ENCODE measurements at regions of chr5 and their contacts with region 1.

Region 1: DNA sequence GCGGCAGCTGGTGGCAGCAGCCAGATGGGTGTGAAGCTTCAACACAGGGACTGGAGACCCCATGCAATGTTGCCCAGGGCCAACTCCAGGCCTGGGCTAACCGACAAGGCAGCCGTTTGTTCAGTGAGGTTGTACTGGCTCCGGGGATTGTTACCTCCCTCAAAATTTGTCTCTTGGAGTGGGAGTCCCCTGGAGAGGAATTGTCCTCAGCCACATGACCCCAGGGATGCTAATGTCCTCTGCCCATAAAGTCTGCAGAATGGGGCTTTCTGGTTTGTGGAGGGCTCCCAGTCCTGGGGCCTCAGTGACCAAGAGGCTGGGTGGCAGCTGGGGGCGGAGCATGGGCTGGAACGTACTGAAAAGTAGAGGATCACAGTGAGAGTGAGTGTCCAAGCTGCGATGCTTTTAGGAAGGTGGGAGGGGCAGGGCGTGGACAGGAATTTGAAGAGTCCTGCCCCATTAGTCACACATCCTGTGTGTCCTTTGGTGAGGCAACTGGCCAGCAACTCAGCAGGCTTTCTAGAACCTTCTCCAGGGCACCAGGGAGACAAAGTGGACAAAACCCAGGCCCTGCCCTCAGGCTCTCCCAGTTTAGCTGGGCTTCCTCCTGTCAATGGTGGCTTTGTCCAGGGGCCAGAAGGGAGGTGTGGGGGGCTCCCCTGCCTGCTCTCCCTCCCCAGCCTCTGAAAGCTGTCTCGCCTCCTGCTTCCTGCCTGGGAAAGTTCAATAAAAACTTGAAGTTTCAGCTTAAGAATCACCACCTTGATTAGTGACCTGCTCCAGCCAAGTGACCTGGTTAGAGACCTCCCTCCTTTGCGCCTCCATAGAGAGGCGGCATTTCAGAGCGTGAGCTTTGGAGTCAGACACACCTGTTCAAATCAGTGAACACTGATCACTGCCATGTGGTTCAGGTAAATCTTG is 114.1 kb downstream of the NSG2 start:
- DNase-seq: peak; percentile 96
- H3K4me3 Mint-ChIP-seq: no peak overlapping the region
- H3K27ac Mint-ChIP-seq: peak overlapping the region; percentile 84
- H3K4me1 Mint-ChIP-seq: peaks cover 32% of the 10 kb centered on the region
- H3K27me3 Mint-ChIP-seq: no peaks in the 10 kb centered on the region
- CTCF ChIP-seq: no peak

Region 2: DNA sequence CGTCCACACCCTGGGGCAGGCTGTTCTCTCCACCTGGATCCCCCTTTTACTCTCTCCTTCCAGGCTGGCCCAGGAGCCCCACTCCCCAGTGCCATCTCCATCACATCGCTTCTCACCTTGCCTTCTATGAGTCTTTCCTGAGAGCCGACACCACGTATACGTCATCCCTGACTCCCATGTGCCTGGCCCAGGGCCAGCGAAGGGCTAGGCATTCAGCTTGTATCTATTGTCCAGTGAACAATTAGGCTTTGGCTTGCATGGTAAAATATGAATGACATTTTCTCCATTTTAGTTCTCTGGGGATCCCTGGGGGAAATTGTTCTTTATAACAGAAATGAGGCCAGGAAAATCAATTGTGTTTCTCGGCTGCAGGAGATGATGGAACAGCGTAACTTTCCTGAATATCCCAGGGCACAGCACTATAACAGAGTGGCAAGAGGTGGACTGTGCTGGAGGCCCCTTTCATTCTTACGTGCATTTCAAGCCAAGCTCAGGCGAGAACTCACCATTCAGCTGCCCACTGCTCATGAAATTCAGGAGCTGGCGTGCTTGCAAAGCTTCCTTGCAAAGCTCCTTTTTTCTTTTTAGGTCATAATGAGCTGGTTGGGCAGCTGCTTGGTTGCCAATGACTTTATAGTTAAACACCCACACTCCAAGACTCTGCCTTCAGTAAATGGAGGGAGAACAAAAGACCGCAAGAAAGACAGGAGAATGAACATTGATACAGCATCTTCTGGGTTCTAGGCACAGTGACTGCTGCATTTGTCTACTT is 76.3 kb before region 1 on chr5:
- CTCF ChIA-PET with region 1: no interaction called
- POLR2A ChIA-PET with region 1: no interaction called
- intact Hi-C with region 1: loop called (anchors 2 kb)
- DNase-seq: peak; percentile 54
- H3K4me3 Mint-ChIP-seq: no peak overlapping the region
- H3K27ac Mint-ChIP-seq: no peak overlapping the region
- H3K4me1 Mint-ChIP-seq: peaks cover 22% of the 10 kb centered on the region
- H3K27me3 Mint-ChIP-seq: no peaks in the 10 kb centered on the region
- CTCF ChIP-seq: no peak